Activated T-helper 1 cell treated with anti-CD3 and anti-CD28 coated beads, Interleukin-12 subunit alpha, Interleukin-12 subunit beta, Interleukin-2, Interleukin-4 antibody, amounts not matched to agents 30 ng/mL and 10 ng/mL and 1 ng/mL, durations not matched to agents 14 hours and 24 hours and 36 hours (primary cell): ENCODE measurements at regions of chr12 and their contacts with region 1.

Region 1: GRCh38 chr12:22409377-22410164 is 75.1 kb upstream of the ST8SIA1 start:
- DNase-seq: peak; percentile 52
- H3K4me3 Mint-ChIP-seq: peak overlapping the region; percentile 6
- H3K27ac Mint-ChIP-seq: peak overlapping the region; percentile 54
- H3K4me1 Mint-ChIP-seq: peaks cover 31% of the 10 kb centered on the region
- H3K27me3 Mint-ChIP-seq: no peaks in the 10 kb centered on the region

Region 2: GRCh38 chr12:21925296-21925913 is 484.2 kb before region 1 on chr12:
- intact Hi-C with region 1: no loop called
- DNase-seq: no peak
- H3K4me3 Mint-ChIP-seq: no peak overlapping the region
- H3K27ac Mint-ChIP-seq: no peak overlapping the region
- H3K4me1 Mint-ChIP-seq: no peaks in the 10 kb centered on the region
- H3K27me3 Mint-ChIP-seq: peaks cover 2% of the 10 kb centered on the region

Region 3: DNA sequence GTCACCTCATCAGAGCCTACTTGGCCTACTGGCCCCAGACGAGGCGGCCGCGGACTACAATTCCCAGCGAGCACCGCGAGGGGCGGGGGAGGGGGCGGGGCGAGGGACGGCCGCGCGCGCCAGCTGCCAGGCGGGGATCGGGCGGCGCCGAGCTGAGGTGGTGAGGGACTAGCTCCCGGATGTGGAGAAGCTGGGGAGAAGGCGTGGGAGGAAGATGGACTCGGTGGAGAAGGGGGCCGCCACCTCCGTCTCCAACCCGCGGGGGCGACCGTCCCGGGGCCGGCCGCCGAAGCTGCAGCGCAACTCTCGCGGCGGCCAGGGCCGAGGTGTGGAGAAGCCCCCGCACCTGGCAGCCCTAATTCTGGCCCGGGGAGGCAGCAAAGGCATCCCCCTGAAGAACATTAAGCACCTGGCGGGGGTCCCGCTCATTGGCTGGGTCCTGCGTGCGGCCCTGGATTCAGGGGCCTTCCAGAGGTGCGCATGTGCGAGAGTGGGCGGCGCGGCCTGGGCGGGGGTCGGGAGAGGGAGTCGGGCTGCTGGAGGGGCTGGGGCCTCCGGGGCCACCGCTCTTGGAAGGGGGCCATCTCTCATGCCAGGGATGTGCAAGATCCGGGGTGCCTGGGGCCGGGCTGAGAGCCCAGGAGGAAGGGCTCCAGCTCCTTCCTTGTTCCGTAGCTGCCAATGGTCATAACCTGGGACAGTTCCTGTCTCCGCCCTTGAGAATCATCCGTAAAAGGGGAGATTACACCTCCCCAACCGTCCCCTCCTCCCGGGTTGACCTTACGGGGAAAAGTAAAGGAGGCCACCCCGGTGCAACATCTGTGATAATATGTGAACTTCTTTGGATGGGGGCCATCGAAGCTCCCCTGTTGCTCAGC is 363.2 kb before region 1 on chr12 and contains the start of gene CMAS:
- intact Hi-C with region 1: loop called (anchors 1 kb)
- DNase-seq: peak; percentile 70
- H3K4me3 Mint-ChIP-seq: peak within 1 kb of the TSS; percentile 95
- H3K27ac Mint-ChIP-seq: peak within 1 kb of the TSS; percentile 88
- H3K4me1 Mint-ChIP-seq: peaks cover 48% of the 10 kb centered on the region
- H3K27me3 Mint-ChIP-seq: no peaks in the 10 kb centered on the region
- total RNA-seq, gene CMAS: 34.1 and 34.9 TPM in 2 replicates

Region 4: GRCh38 chr12:22312336-22312735 is 97.2 kb before region 1 on chr12:
- intact Hi-C with region 1: no loop called
- DNase-seq: no peak
- H3K4me3 Mint-ChIP-seq: no peak overlapping the region
- H3K27ac Mint-ChIP-seq: no peak overlapping the region
- H3K4me1 Mint-ChIP-seq: no peaks in the 10 kb centered on the region
- H3K27me3 Mint-ChIP-seq: peaks cover 7% of the 10 kb centered on the region

Region 5: DNA sequence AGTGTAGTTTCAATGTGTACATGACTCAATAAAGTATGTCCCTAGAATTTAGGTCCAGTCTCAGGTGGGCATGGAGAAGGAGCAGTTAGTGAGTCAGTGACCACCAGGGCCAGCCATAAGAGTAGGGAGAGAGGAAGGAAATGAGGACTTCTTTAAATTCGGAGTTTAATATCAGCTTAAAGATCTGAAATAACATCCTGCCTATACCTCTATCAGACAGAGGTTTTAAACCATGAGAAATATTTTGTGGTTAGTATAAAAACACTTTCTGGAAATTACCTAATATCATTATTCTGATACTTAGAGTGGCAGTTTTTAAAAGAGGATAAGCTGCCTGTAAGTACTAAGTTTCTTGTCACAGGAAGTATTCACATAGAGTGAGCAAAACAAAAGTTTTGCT is 13.3 kb before region 1 on chr12:
- intact Hi-C with region 1: loop called (anchors 1 kb)
- DNase-seq: no peak
- H3K4me3 Mint-ChIP-seq: peak overlapping the region; percentile 9
- H3K27ac Mint-ChIP-seq: no peak overlapping the region
- H3K4me1 Mint-ChIP-seq: peaks cover 27% of the 10 kb centered on the region
- H3K27me3 Mint-ChIP-seq: no peaks in the 10 kb centered on the region